HepG2 (cell line): ENCODE measurements at regions of chr14 and their contacts with region 1.

Region 1: GRCh38 chr14:50532502-50533240 is at the start of gene MAP4K5:
- DNase-seq: peak; percentile 82
- ATAC-seq: peak; percentile 97
- H3K4me3 ChIP-seq: peak within 1 kb of the TSS; percentile 87 to 91 (median 90)
- H3K27ac ChIP-seq: peak within 1 kb of the TSS; percentile 85
- H3K4me1 ChIP-seq: peaks cover 43% of the 10 kb centered on the region
- H3K27me3 ChIP-seq: no peaks in the 10 kb centered on the region; a peak in 1 of 5 replicates
- CTCF ChIP-seq: peak; percentile 97
- EP300 ChIP-seq: no peak
- POLR2A ChIP-seq: peak; percentile 25 to 55; a peak in 3 of 4 replicates
- RAD21 ChIP-seq: peak; percentile 99
- total RNA-seq, gene MAP4K5: 23.9 and 26.3 TPM in 2 replicates

Region 2: DNA sequence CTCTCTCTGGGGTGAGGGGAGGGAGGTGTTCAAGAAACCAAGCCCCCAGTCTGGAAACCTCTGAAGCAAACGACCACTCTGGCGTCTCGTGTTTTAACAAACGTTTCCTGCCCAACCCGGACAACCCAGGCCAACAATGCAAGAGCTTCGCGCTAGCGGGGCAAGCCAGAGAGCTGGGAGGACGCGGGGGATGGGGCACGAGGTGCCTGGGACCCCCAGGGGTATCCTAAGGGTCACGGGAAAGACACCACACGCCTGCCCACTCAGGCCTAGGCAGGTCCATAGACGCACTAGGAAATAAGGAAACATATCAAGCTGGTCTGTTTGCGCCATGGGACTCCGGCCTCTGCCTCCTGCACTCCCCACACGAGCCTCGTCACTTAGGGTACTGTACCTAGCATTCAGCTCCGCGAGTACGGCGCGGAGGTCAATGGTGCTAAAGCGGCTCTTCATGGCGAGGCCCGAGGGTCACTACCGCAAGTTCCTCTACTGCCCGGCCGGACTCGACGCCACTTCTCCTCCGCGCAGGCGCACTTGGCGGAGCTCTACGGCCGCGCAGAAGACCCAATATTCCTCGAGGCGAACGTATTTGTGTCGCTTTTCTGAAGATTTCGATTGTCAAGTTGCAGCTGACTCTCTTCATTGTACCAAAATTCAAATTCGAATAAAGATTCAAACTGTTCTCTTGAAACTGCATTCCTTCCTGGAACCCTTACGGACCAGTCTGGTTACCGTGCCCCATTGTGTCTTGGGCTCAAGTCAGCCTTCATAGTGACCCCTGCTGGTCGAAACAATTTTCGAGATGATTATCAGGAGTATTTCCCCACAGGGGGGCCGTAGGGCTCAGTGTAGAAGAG is 680.1 kb before region 1 on chr14 and contains the start of gene NEMF:
- CTCF ChIA-PET with region 1: interaction called, 3 read pairs
- POLR2A ChIA-PET with region 1: no interaction called
- in situ Hi-C with region 1: loop called (anchors 25 kb)
- intact Hi-C with region 1: no loop called
- DNase-seq: peak; percentile 87
- ATAC-seq: peak; percentile 87
- H3K4me3 ChIP-seq: peak within 1 kb of the TSS; percentile 95 to 97 (median 96)
- H3K27ac ChIP-seq: peak within 1 kb of the TSS; percentile 89
- H3K4me1 ChIP-seq: peaks cover 19% of the 10 kb centered on the region
- H3K27me3 ChIP-seq: no peaks in the 10 kb centered on the region; a peak in 1 of 5 replicates
- CTCF ChIP-seq: peak; percentile 83
- EP300 ChIP-seq: no peak
- POLR2A ChIP-seq: peak; percentile 90 to 93
- RAD21 ChIP-seq: no peak; the same call in 1 of the 2 replicates
- total RNA-seq, gene NEMF: 57.9 and 62.5 TPM in 2 replicates

Region 3: GRCh38 chr14:49862089-49862673 is 670.5 kb before region 1 on chr14:
- CTCF ChIA-PET with region 1: no interaction called
- POLR2A ChIA-PET with region 1: no interaction called
- in situ Hi-C with region 1: loop called (anchors 25 kb)
- intact Hi-C with region 1: loop called (anchors 5 kb)
- DNase-seq: peak; percentile 69
- ATAC-seq: peak; percentile 69
- H3K4me3 ChIP-seq: peak overlapping the region; percentile 72 to 89 (median 80)
- H3K27ac ChIP-seq: peak overlapping the region; percentile 92
- H3K4me1 ChIP-seq: peaks cover 30% of the 10 kb centered on the region
- H3K27me3 ChIP-seq: no peaks in the 10 kb centered on the region; a peak in 1 of 5 replicates
- CTCF ChIP-seq: peak; percentile 89
- EP300 ChIP-seq: no peak
- POLR2A ChIP-seq: no peak
- RAD21 ChIP-seq: no peak

Region 4: GRCh38 chr14:50231475-50232275 is 301.0 kb before region 1 on chr14 and contains the start of gene SOS2:
- CTCF ChIA-PET with region 1: no interaction called
- POLR2A ChIA-PET with region 1: no interaction called
- in situ Hi-C with region 1: no loop called
- intact Hi-C with region 1: loop called (anchors 5 kb)
- DNase-seq: peak; percentile 78
- ATAC-seq: peak; percentile 95
- H3K4me3 ChIP-seq: peak within 1 kb of the TSS; percentile 77 to 90 (median 87)
- H3K27ac ChIP-seq: peak within 1 kb of the TSS; percentile 97
- H3K4me1 ChIP-seq: peaks cover 37% of the 10 kb centered on the region
- H3K27me3 ChIP-seq: no peaks in the 10 kb centered on the region
- CTCF ChIP-seq: peak; percentile 51
- EP300 ChIP-seq: no peak
- POLR2A ChIP-seq: peak; percentile 73 to 97
- RAD21 ChIP-seq: 0 out of 2 replicates have a peak, but pooled peaks have one; percentile 3
- total RNA-seq, gene SOS2: 12.1 and 14.9 TPM in 2 replicates

Region 5: DNA sequence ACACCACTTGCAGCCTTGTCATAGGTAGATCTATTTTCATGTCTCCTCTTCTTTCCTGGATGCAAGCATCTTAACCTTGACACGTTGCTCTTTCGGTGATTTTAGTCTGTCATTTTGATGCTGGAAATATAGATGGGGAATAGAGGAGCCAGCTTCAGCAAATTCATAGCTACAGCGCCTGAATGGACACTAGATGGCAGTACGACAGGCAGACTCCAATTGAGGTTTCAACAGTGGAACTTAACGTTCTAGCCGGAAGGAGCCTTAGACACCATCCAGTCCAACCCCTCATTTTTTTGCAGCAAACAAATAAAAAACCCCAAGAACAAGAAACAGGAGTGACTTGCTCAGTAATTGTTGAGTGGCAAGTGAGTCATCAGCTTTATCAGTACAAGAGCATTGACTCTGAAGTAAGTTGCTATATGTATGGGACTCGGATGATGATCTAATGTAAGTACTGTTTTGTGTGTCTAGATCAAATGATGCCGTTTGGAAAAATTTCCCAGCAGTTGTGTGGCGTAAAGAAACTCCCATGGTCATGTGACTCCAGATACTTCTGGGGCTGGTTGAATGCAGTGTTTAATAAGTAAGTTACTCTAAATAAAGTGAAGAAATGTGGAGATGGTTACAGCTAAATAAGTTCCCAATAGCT is 211.5 kb before region 1 on chr14:
- CTCF ChIA-PET with region 1: interaction called, 44 read pairs
- POLR2A ChIA-PET with region 1: interaction called, 3 read pairs
- in situ Hi-C with region 1: loop called (anchors 5 kb)
- intact Hi-C with region 1: loop called (anchors 1 kb)
- DNase-seq: peak; percentile 68
- ATAC-seq: peak; percentile 96
- H3K4me3 ChIP-seq: no peak overlapping the region
- H3K27ac ChIP-seq: no peak overlapping the region
- H3K4me1 ChIP-seq: peaks cover 10% of the 10 kb centered on the region
- H3K27me3 ChIP-seq: no peaks in the 10 kb centered on the region
- CTCF ChIP-seq: peak; percentile 89
- EP300 ChIP-seq: no peak
- POLR2A ChIP-seq: no peak
- RAD21 ChIP-seq: peak; percentile 34; the same call in 1 of the 2 replicates

Region 6: DNA sequence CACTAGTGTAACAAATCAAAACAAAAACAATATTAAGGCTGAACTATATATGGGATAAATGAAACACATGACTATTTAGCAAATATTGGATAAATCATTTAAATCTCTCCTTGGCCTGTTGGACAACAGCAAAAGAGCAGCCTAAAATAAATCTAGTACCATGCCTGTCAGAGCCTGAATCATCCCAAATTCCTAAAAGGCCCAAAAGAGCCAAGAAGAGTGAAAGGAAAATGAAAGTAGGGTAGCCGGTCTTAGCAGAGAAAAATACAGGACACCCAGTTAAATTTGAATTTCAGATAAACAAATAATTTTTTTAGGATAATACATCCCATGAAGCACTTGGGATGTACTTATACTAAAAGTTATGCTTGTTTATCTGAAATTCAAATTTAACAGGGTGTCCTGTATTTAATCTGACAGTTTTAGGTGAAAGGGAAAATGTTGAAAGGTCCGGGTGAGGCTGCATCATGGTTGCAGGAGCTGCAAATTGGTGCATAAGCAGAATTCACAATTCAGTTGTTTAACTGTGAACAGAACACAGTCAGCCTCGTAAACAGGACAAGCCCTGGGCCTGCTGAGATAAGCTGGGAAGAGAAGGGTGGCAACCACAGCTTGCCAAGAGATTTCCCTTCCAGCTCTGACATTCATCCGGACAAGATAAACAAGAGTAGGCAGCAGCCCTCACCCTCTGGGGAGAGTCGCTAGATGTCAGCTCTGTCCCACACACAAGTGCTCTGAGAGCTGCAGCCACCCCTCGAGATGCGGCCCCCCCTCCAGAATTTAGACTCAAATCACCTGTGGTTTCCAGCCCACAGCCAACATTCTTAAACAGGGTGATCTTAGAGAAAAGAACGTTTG is 190.2 kb before region 1 on chr14:
- CTCF ChIA-PET with region 1: no interaction called
- POLR2A ChIA-PET with region 1: no interaction called
- in situ Hi-C with region 1: no loop called
- intact Hi-C with region 1: loop called (anchors 5 kb)
- DNase-seq: peak; percentile 66
- ATAC-seq: peak; percentile 94
- H3K4me3 ChIP-seq: no peak overlapping the region
- H3K27ac ChIP-seq: no peak overlapping the region
- H3K4me1 ChIP-seq: peaks cover 10% of the 10 kb centered on the region
- H3K27me3 ChIP-seq: no peaks in the 10 kb centered on the region
- CTCF ChIP-seq: peak; percentile 86
- EP300 ChIP-seq: no peak
- POLR2A ChIP-seq: no peak
- RAD21 ChIP-seq: peak; percentile 65

Region 7: DNA sequence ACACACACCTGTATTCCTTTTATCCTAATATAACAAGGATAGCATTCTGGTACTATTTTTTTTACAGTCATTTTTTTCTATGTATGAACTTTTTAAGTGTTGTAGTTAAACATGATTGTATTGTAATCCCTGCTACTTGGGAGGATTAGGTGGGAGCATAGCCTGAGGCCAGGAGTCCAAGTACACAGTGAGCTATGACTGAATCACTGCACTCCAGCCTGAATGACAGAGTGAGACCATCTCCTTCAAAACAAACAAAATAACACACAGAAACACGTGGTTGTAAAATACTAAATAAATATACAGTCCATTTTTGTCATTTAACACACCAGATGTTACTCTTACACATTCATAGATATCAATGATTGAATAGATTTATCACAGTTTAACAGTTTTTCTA is 57.2 kb before region 1 on chr14:
- CTCF ChIA-PET with region 1: no interaction called
- POLR2A ChIA-PET with region 1: no interaction called
- in situ Hi-C with region 1: no loop called
- intact Hi-C with region 1: loop called (anchors 5 kb)
- DNase-seq: peak; percentile 52
- ATAC-seq: peak; percentile 91
- H3K4me3 ChIP-seq: no peak overlapping the region
- H3K27ac ChIP-seq: no peak overlapping the region
- H3K4me1 ChIP-seq: peaks cover 6% of the 10 kb centered on the region
- H3K27me3 ChIP-seq: no peaks in the 10 kb centered on the region
- CTCF ChIP-seq: no peak
- EP300 ChIP-seq: no peak
- POLR2A ChIP-seq: no peak
- RAD21 ChIP-seq: no peak